Activated naive CD4-positive, alpha-beta T cell treated with anti-CD3 and anti-CD28 coated beads for 36 hours (primary cell): ENCODE measurements at regions of chr11 and their contacts with region 1.

Region 1: GRCh38 chr11:85664615-85665481 is at the start of gene CREBZF:
- DNase-seq: peak; percentile 98
- H3K4me3 Mint-ChIP-seq: peak within 1 kb of the TSS; percentile 98
- H3K27ac Mint-ChIP-seq: peak within 1 kb of the TSS; percentile 96
- H3K4me1 Mint-ChIP-seq: peaks cover 23% of the 10 kb centered on the region
- H3K27me3 Mint-ChIP-seq: no peaks in the 10 kb centered on the region
- total RNA-seq, gene CREBZF: 53.3 to 53.9 TPM

Region 2: GRCh38 chr11:85602526-85603213 is 62.2 kb before region 1 on chr11:
- CTCF ChIA-PET with region 1: no interaction called
- intact Hi-C with region 1: no loop called
- DNase-seq: no peak
- H3K4me3 Mint-ChIP-seq: no peak overlapping the region
- H3K27ac Mint-ChIP-seq: no peak overlapping the region
- H3K4me1 Mint-ChIP-seq: no peaks in the 10 kb centered on the region
- H3K27me3 Mint-ChIP-seq: no peaks in the 10 kb centered on the region

Region 3: DNA sequence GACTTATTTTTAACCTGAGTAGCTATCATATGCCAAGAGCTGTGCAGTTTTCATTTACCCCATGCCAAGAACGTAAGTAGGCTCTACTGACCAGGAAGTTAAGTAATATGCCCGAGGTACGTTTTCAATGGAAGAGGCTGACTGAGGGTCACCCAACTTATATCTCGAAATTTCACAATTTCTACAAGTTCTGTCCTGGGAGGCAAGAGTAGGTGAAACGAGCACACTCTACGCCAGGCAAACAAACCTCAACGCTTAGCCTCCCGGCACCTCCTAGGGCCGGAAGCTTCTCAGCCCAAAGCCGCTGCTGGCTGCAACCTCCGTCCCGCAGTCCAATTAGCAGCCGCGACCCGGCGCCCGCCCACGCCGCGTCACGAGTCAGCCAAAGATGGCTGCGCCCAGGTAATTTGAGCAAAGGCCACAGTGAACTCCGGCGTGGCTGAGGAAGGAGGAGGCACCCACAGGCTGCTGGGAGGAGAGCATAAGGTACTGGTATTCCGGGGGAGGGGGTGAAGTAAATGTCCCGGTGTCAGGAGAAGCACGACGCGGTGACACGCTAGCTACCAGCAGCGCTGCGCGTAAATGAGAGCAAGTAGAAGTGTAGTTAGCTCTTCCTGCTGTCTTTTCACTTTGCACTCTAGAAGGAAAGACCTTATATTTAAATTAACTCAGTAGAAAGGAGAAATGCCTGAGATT is 17.1 kb before region 1 on chr11 and contains the start of gene TMEM126A:
- CTCF ChIA-PET with region 1: interaction called, 3 read pairs
- intact Hi-C with region 1: loop called (anchors 1 kb)
- DNase-seq: peak; percentile 96
- H3K4me3 Mint-ChIP-seq: peak within 1 kb of the TSS; percentile 90
- H3K27ac Mint-ChIP-seq: peak within 1 kb of the TSS; percentile 96
- H3K4me1 Mint-ChIP-seq: peaks cover 29% of the 10 kb centered on the region
- H3K27me3 Mint-ChIP-seq: peaks cover 6% of the 10 kb centered on the region
- total RNA-seq, gene TMEM126A: 47.5 to 56.2 TPM

Region 4: GRCh38 chr11:85682330-85683305 is 17.8 kb after region 1 on chr11:
- CTCF ChIA-PET with region 1: interaction called, 5 read pairs
- intact Hi-C with region 1: loop called (anchors 1 kb)
- DNase-seq: peak; percentile 72
- H3K4me3 Mint-ChIP-seq: peak overlapping the region; percentile 73
- H3K27ac Mint-ChIP-seq: peak overlapping the region; percentile 57
- H3K4me1 Mint-ChIP-seq: peaks cover 12% of the 10 kb centered on the region
- H3K27me3 Mint-ChIP-seq: no peaks in the 10 kb centered on the region

Region 5: DNA sequence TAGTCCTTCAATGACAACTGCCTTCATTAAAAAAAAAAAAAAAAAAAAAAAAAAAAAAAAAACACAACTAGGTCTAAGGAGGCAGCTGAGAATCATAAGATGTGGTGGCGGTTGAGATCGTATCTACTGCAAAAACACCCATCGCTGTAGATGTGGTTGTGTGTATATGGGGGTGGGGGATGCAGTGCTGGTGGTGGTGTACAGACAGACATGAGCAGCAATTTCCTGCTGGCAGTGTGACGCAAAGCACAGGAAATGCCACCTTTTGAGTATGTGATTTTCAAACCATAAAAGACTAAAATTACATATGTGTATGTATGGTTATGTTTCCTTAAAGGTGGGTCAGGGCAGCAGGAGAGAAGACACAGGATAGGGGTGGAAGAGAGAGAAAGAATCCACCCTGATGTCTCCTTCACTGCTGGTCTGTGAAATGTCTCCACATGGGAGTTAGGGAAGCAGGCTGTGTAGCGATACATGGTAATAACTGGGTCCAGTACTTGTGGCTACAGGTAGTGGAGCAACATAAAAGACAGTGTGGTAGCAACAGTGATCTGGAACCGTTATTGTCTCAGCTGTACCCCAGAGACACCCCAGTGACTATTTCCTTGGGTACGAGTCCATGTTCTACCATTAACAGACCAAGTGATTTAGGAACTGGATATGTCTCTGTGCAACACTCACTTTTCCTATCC is 88.2 kb after region 1 on chr11:
- CTCF ChIA-PET with region 1: no interaction called
- intact Hi-C with region 1: loop called (anchors 1 kb)
- DNase-seq: peak; percentile 94
- H3K4me3 Mint-ChIP-seq: peak overlapping the region; percentile 57
- H3K27ac Mint-ChIP-seq: peak overlapping the region; percentile 97
- H3K4me1 Mint-ChIP-seq: peaks cover 95% of the 10 kb centered on the region
- H3K27me3 Mint-ChIP-seq: no peaks in the 10 kb centered on the region

Region 6: DNA sequence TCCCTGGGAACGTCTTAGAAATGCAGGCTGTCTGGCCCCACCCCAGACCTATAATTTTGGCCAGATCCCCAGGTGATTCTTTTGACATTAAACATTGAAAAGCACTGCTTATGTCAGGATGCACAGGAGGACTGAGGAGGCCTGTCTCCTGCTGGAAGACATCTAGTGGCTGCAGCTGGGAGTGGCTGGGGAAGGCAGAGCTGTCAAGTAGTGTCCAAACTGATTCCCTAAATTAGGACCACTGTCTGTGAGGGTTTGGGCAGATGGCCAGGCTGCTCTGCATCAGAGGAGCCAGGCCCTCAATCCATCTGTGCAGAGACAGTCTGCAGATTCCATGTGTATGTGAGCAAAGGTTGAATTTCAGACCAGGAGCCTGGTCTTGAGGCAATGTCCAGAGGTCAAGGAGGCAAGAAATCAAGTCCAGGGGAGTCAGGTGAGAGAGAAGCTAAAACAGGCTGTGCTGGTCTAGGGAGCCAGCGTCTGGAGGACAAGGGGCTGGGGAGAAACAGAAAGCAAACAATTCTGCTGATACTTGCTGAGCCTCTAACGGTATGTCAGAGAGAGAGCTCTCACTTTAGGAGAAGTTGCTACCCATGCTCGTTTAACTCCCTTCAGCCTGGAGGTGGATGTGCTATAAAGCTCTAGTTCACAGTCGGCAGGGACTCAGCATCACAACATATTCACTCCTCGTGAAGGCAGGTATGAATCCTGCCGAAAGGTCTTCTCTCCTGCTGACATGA is 161.4 kb after region 1 on chr11:
- CTCF ChIA-PET with region 1: no interaction called
- intact Hi-C with region 1: loop called (anchors 1 kb)
- DNase-seq: peak; percentile 51
- H3K4me3 Mint-ChIP-seq: peak overlapping the region; percentile 28
- H3K27ac Mint-ChIP-seq: peak overlapping the region; percentile 20
- H3K4me1 Mint-ChIP-seq: peaks cover 57% of the 10 kb centered on the region
- H3K27me3 Mint-ChIP-seq: no peaks in the 10 kb centered on the region

Region 7: GRCh38 chr11:85875142-85875922 is 210.5 kb after region 1 on chr11:
- CTCF ChIA-PET with region 1: no interaction called
- intact Hi-C with region 1: no loop called
- DNase-seq: no peak
- H3K4me3 Mint-ChIP-seq: no peak overlapping the region
- H3K27ac Mint-ChIP-seq: no peak overlapping the region
- H3K4me1 Mint-ChIP-seq: peaks cover 19% of the 10 kb centered on the region
- H3K27me3 Mint-ChIP-seq: no peaks in the 10 kb centered on the region

Region 8: GRCh38 chr11:86244522-86245368 is 579.9 kb after region 1 on chr11 and contains the start of gene EED:
- CTCF ChIA-PET with region 1: no interaction called
- intact Hi-C with region 1: loop called (anchors 1 kb)
- DNase-seq: peak; percentile 94
- H3K4me3 Mint-ChIP-seq: no peak within 1 kb of the TSS
- H3K27ac Mint-ChIP-seq: no peak within 1 kb of the TSS
- H3K4me1 Mint-ChIP-seq: peaks cover 35% of the 10 kb centered on the region
- H3K27me3 Mint-ChIP-seq: no peaks in the 10 kb centered on the region
- total RNA-seq, gene EED: 60.4 to 61.0 TPM

Region 9: GRCh38 chr11:86802601-86803051 is 1137.8 kb after region 1 on chr11:
- CTCF ChIA-PET with region 1: no interaction called
- intact Hi-C with region 1: loop called (anchors 1 kb)
- DNase-seq: peak; percentile 38
- H3K4me3 Mint-ChIP-seq: no peak overlapping the region
- H3K27ac Mint-ChIP-seq: no peak overlapping the region
- H3K4me1 Mint-ChIP-seq: peaks cover 53% of the 10 kb centered on the region
- H3K27me3 Mint-ChIP-seq: peaks cover 46% of the 10 kb centered on the region